AG04450 (cell line): ENCODE measurements at regions of chr4 and their contacts with region 1.

Region 1: DNA sequence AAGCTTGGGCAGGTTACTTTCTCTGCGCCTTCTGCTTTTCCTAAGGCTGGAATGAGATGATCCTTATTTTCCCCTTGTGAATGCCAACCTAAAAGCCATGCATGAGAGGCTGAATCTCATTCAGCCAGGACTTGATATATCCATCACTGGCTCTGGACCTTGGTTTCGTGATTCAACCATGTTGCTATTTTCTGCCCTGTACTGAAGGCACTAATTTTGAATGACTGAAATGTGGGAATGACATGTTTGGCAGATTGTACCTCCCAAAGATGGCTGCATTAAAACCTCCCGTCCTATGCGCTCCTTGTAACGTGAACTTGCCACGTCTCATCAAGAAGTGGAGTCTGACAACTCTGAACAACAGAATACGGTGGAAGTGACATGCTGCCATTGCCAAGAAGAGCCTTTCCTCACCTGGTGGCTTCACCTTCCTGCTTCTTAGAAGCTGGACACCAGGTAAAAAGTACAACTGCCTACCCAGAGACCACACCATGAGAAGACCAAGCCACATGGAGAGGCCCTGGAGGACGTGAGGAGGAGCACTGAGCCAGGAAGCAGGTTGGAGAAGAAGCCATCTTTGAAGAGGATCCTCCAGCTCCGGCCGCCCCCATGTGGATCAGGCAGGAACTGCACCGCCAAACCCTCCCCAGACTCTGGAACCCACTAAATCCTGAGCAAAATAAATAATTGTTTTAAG is 174.5 kb downstream of the NSUN7 start:
- DNase-seq: no peak
- H3K4me3 ChIP-seq: no peak overlapping the region
- H3K27ac ChIP-seq: no peak overlapping the region
- H3K27me3 ChIP-seq: no peaks in the 10 kb centered on the region
- CTCF ChIP-seq: peak; percentile 97

Region 2: GRCh38 chr4:40685300-40685699 is 238.9 kb before region 1 on chr4:
- CTCF ChIA-PET with region 1: no interaction called
- POLR2A ChIA-PET with region 1: no interaction called
- DNase-seq: peak; percentile 20
- H3K4me3 ChIP-seq: no peak overlapping the region
- H3K27ac ChIP-seq: no peak overlapping the region
- H3K27me3 ChIP-seq: no peaks in the 10 kb centered on the region
- CTCF ChIP-seq: no peak

Region 3: DNA sequence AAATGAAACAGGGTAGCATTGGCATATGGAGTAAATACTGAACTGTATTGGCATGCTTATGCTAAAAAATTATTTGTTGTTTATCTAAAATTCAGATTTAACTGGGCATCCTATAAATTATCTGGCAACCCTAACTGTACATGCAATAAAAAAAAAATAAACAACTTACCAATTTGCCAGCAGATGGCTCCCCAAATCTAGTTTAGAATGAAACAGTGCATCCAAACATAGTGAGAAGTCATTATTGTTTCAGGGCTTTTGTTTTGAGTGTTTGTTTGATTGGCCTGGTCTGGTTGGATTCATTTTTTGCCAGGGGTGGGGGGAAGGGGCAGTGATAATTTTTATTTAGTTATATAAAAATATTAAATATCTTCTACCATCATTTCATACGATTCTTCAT is 187.3 kb before region 1 on chr4:
- CTCF ChIA-PET with region 1: interaction called, 46 read pairs
- POLR2A ChIA-PET with region 1: no interaction called
- DNase-seq: no peak
- H3K4me3 ChIP-seq: no peak overlapping the region
- H3K27ac ChIP-seq: no peak overlapping the region
- H3K27me3 ChIP-seq: no peaks in the 10 kb centered on the region
- CTCF ChIP-seq: peak; percentile 43

Region 4: DNA sequence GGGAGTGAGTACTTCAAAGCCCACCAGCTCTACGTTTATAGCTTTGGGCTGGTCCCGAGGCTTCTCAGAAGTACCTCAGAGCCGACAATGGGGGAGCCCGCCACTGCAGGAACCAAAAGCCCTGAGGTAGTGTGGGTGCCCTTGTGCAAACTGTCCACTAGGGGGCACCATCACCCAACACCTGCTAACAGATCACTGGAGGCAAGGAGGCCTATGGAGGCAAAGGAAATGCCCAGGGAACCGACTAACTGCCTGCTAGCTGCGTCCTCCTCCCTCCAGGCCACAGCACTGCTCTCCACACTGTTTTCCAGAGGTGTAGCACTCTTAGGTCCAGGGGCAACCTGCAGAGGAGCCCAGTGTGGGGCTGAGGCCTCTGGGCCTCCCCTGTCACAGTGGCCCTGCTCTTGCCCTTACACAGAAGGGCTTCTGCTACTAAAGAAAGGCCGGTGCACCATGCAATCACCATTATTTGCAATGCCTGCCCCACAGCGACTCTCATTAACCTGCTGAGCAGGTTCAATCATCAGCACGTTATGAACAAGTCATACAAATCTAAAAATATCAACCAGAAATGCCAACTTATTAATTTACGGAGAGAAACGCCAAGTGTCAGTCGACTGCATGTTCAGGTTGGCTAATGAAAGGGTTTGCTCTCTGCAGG is 15.4 kb before region 1 on chr4:
- CTCF ChIA-PET with region 1: interaction called, 29 read pairs
- POLR2A ChIA-PET with region 1: interaction called, 3 read pairs
- DNase-seq: peak; percentile 44
- H3K4me3 ChIP-seq: no peak overlapping the region
- H3K27ac ChIP-seq: peak overlapping the region; percentile 54
- H3K27me3 ChIP-seq: no peaks in the 10 kb centered on the region
- CTCF ChIP-seq: peak; percentile 91

Region 5: GRCh38 chr4:40976343-40976742 is 52.1 kb after region 1 on chr4:
- CTCF ChIA-PET with region 1: interaction called, 15 read pairs
- POLR2A ChIA-PET with region 1: no interaction called
- DNase-seq: peak; percentile 41
- H3K4me3 ChIP-seq: no peak overlapping the region
- H3K27ac ChIP-seq: no peak overlapping the region
- H3K27me3 ChIP-seq: no peaks in the 10 kb centered on the region
- CTCF ChIP-seq: peak; percentile 76

Region 6: DNA sequence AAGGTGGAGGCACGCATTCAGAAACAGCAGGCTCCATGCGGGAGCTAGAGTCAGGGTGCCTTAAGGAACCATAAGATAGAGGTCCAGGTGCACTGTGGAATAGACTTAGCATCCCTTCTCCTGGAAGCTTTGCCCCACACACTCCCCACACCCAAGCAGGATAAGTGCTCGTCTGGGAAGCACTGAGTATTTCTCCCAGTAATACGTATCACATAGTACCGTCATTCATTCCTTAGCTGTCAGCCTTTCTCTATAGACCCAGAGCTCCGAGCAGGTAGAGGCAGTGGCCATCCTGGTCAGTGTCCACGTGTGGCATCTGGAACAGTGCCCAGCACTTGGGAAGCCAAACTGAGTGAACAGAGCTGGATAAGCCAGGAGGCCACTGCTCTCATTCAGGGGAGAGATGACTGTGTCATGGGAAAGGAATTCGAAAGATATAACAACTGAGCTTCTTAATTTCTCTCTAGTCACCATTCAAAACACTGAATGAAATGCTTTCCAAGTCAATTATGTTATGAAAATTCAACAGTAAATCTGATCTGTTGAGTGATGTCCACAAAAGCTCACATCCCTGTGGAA is 280.2 kb after region 1 on chr4:
- CTCF ChIA-PET with region 1: interaction called, 10 read pairs
- POLR2A ChIA-PET with region 1: no interaction called
- DNase-seq: no peak
- H3K4me3 ChIP-seq: no peak overlapping the region
- H3K27ac ChIP-seq: peak overlapping the region; percentile 62
- H3K27me3 ChIP-seq: no peaks in the 10 kb centered on the region
- CTCF ChIP-seq: no peak

Region 7: DNA sequence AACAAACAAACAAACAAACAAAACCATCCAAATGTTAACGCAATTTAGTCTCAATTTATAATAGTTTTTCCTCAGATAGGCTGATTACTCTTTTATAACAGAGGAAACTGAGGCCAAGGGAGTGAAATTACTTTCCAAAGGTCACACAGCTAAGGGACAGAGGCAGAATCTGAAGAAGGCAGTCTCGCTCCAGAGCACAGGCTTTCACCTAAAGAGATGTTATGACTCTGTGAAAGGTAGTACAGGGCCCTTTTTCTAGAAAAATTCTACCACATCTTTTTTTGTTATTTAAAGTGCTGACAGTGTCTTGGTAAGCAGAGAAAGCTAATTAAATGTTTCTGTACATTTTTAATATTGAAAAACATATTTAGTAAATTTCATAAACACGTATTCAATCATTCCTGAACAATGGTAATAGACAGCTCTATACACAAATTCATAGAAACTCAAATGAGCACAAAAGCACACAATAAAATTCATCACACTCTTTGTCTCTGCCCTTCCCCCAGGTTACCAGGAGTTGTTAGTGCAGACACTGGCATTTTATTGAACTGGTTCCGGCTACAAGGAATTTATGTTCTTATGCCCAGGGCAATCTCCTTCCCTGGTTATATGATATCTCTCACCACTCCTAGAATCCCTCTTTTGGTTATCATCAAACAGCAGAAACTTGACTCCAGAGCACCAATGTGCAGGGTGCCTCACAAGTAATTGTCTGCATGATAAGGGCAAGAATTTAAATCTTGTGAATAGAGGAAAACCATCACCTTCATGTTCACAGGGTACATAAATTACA is 297.8 kb after region 1 on chr4:
- CTCF ChIA-PET with region 1: interaction called, 39 read pairs
- POLR2A ChIA-PET with region 1: no interaction called
- DNase-seq: no peak
- H3K4me3 ChIP-seq: no peak overlapping the region
- H3K27ac ChIP-seq: no peak overlapping the region
- H3K27me3 ChIP-seq: no peaks in the 10 kb centered on the region
- CTCF ChIP-seq: no peak